ENCODE measurements at regions of chr20 and their contacts with region 1.

Region 1: DNA sequence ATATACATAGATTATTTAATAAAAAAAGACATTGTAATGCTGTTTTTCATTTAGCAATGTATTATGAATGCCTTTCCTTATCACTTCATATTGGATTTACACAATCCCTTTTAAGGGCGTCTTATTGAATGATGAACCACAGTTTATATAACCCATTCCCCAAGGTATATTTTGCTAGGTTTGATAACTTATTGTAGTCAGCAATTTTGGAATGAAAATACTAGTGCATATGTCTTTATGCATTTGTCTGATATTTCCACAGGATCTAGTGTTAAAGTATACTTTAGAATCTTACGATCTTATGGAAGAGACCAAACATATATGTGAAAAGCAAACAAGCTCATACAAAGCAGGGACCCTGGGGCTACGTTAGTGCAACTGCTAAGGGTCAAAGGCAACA is 180.4 kb upstream of the RIN2 start:
- DNase-seq: no peak
- ATAC-seq: no peak
- H3K4me3 ChIP-seq: no peak overlapping the region
- H3K27ac ChIP-seq: no peak overlapping the region
- H3K4me1 ChIP-seq: no peaks in the 10 kb centered on the region
- H3K27me3 ChIP-seq: no peaks in the 10 kb centered on the region
- CTCF ChIP-seq: no peak
- POLR2A ChIP-seq: no peak

Region 2: GRCh38 chr20:19070681-19071445 is 506.8 kb before region 1 on chr20:
- in situ Hi-C with region 1: no loop called
- intact Hi-C with region 1: no loop called
- DNase-seq: no peak
- ATAC-seq: no peak
- H3K4me3 ChIP-seq: no peak overlapping the region
- H3K27ac ChIP-seq: no peak overlapping the region
- H3K4me1 ChIP-seq: no peaks in the 10 kb centered on the region
- H3K27me3 ChIP-seq: no peaks in the 10 kb centered on the region
- CTCF ChIP-seq: no peak
- POLR2A ChIP-seq: no peak

Region 3: DNA sequence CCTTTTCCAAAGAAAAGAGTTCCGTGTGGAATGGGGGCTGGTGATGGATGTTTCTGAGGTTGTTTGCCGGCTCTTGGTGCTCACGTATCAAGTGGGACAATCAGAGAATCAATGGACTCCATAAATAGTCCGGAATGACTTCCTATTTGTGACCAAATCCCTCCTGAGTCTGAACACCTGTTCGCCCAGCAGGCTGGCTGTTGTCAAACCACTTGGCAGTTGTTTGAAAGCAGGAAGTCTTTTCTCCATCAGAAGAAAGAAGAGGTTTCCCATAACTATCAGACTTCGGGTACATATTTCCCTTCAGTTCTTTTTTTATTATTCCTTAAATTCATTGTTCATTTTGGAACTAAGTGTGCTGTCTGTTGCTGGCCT is 25.7 kb after region 1 on chr20:
- in situ Hi-C with region 1: no loop called
- intact Hi-C with region 1: loop called (anchors 1 kb)
- DNase-seq: no peak
- ATAC-seq: peak in 1 of 2 donors; percentile 52
- H3K4me3 ChIP-seq: no peak overlapping the region
- H3K27ac ChIP-seq: peak overlapping the region in 3 of 4 donors; percentile 1 to 35 (median 20)
- H3K4me1 ChIP-seq: peaks cover 24 to 30% of the 10 kb centered on the region in 2 donors
- H3K27me3 ChIP-seq: no peaks in the 10 kb centered on the region
- CTCF ChIP-seq: no peak
- POLR2A ChIP-seq: no peak

Measured in gastrocnemius medialis (tissue), 4 donors.